B cell (primary cell): ENCODE measurements at regions of chr7 and their contacts with region 1.

Region 1: DNA sequence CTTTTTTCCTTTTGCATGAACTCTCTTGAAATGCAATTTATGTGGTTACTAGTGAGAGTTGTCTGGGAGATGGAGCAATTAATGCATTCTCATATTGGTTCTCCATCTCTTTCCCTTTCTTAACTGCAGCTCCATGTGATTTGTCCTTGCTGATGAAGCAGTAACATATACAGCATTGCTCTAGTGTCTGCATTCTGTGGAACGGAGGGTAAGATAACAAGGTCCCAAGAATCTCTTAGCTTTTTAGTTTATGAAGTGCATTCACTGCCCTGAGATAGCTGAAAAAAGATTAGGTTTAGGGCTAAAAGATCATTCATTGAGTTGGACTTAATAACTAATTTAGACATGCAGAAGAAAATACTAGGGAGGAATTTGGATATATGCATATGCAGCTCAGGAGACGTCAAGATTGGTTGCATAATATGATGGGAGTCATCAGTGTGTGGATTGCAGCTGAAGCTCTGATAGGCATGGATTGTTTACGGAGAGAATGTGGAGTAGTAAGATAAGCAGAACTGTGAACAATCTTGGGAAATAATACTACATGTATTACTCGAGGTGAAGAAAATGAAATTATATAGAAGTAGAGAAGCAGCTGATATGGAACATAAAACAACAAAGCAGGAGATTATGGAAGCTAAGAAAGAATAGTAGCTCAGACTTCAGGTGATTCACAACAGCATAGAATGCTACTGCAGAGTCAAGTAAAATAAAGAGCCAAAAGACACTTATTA is 404.7 kb downstream of the ARL4A start:
- DNase-seq: no peak
- ATAC-seq: no peak
- H3K4me3 ChIP-seq: no peak overlapping the region
- H3K4me3 Mint-ChIP-seq: no peak overlapping the region
- H3K27ac ChIP-seq: no peak overlapping the region
- H3K27ac Mint-ChIP-seq: no peak overlapping the region
- H3K4me1 ChIP-seq: peaks cover 0 to 11% of the 10 kb centered on the region in 2 donors
- H3K4me1 Mint-ChIP-seq: peaks cover 29% of the 10 kb centered on the region
- H3K27me3 ChIP-seq: no peaks in the 10 kb centered on the region
- H3K27me3 Mint-ChIP-seq: peaks cover 11% of the 10 kb centered on the region
- CTCF ChIP-seq: no peak

Region 2: DNA sequence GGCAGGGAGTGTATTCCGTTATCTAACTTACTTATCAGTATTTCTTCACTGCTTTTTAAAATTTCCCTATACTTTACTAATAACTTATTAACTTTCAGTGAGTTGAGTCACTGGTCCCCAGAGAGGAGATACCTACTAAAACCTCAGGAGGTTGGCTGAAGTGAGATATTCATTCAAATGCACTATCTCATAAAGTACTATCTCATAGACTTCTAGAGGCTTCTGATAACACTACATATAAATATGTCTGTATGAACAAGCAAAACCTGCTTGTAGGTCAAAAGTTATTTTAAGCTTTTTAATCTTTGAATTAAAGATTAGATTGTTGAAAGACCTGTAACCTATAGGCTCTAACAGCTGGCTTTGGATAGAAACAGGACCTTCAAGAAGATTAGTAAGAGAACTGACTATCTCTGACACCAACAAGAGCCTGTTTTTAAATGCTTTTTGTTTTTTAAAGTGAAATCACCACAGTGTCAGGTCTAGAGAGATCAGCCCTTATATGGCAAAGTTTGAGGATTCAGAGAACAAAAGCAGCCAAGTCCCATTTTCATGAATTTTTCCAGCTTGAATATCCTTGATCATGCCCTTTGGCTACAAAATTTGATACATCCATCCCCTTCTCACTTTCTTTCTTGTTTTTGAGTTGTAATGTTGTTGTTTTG is 162.5 kb before region 1 on chr7:
- CTCF ChIA-PET with region 1: no interaction called
- POLR2A ChIA-PET with region 1: no interaction called
- intact Hi-C with region 1: no loop called
- DNase-seq: no peak
- ATAC-seq: no peak
- H3K4me3 ChIP-seq: no peak overlapping the region
- H3K4me3 Mint-ChIP-seq: no peak overlapping the region
- H3K27ac ChIP-seq: no peak overlapping the region
- H3K27ac Mint-ChIP-seq: no peak overlapping the region
- H3K4me1 ChIP-seq: no peaks in the 10 kb centered on the region
- H3K4me1 Mint-ChIP-seq: no peaks in the 10 kb centered on the region
- H3K27me3 ChIP-seq: no peaks in the 10 kb centered on the region
- H3K27me3 Mint-ChIP-seq: no peaks in the 10 kb centered on the region
- CTCF ChIP-seq: no peak

Region 3: DNA sequence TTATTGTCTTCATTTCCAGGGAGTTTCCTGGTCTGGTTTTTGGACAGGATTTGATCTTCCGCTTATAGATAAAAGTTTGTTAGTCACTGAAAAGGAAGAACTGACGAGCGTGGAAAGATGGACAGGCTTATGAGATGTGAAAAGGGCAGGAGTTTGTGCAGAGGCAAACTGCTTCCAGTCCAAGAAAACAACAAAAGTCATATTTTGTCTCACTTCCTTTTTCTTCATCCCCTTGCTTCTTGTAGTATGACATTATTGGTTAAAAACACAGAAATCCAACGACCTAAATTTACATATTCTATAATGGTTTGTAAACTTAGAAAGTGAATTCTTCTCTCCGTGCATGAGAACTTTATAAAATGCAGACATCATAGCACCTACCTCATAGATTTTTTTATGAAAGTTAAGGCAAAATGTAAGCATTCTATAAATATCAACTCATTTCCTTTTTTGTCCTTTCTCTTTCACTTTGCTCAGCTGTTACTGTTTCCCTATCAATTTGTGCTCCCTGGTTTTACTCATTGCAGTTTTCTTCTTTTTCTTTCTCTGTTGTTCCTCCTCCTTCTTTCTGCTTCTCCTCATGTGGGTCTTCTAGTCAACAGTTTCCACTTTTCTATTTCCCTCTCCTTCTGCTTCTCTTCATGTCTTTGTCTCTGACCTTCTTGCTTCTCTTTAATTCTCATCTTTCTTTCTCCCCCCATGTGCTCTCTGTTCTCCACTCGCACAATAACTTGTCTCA is 34.5 kb before region 1 on chr7:
- CTCF ChIA-PET with region 1: no interaction called
- POLR2A ChIA-PET with region 1: no interaction called
- intact Hi-C with region 1: loop called (anchors 5 kb)
- DNase-seq: peak; percentile 67
- ATAC-seq: peak; percentile 78
- H3K4me3 ChIP-seq: peak overlapping the region; percentile 30 to 77 (median 50)
- H3K4me3 Mint-ChIP-seq: peak overlapping the region; percentile 69
- H3K27ac ChIP-seq: peak overlapping the region; percentile 86 to 93
- H3K27ac Mint-ChIP-seq: peak overlapping the region; percentile 96
- H3K4me1 ChIP-seq: peaks cover 36 to 43% of the 10 kb centered on the region in 2 donors
- H3K4me1 Mint-ChIP-seq: peaks cover 38% of the 10 kb centered on the region
- H3K27me3 ChIP-seq: no peaks in the 10 kb centered on the region
- H3K27me3 Mint-ChIP-seq: no peaks in the 10 kb centered on the region
- CTCF ChIP-seq: no peak